ENCODE measurements at regions of chr10 and their contacts with region 1.

Region 1: GRCh38 chr10:132223156-132223590 is 36.4 kb downstream of the DPYSL4 start:
- DNase-seq: peak; percentile 89
- ATAC-seq: peak; percentile 99
- H3K4me3 Mint-ChIP-seq: no peak overlapping the region
- H3K27ac Mint-ChIP-seq: no peak overlapping the region
- H3K4me1 Mint-ChIP-seq: peaks cover 2% of the 10 kb centered on the region
- H3K27me3 Mint-ChIP-seq: no peaks in the 10 kb centered on the region

Region 2: GRCh38 chr10:131651674-131652437 is 571.3 kb before region 1 on chr10:
- CTCF ChIA-PET with region 1: no interaction called
- POLR2A ChIA-PET with region 1: no interaction called
- intact Hi-C with region 1: no loop called
- DNase-seq: no peak
- ATAC-seq: no peak
- H3K4me3 Mint-ChIP-seq: no peak overlapping the region
- H3K27ac Mint-ChIP-seq: no peak overlapping the region
- H3K4me1 Mint-ChIP-seq: peaks cover 2% of the 10 kb centered on the region
- H3K27me3 Mint-ChIP-seq: peaks cover 9% of the 10 kb centered on the region

Region 3: DNA sequence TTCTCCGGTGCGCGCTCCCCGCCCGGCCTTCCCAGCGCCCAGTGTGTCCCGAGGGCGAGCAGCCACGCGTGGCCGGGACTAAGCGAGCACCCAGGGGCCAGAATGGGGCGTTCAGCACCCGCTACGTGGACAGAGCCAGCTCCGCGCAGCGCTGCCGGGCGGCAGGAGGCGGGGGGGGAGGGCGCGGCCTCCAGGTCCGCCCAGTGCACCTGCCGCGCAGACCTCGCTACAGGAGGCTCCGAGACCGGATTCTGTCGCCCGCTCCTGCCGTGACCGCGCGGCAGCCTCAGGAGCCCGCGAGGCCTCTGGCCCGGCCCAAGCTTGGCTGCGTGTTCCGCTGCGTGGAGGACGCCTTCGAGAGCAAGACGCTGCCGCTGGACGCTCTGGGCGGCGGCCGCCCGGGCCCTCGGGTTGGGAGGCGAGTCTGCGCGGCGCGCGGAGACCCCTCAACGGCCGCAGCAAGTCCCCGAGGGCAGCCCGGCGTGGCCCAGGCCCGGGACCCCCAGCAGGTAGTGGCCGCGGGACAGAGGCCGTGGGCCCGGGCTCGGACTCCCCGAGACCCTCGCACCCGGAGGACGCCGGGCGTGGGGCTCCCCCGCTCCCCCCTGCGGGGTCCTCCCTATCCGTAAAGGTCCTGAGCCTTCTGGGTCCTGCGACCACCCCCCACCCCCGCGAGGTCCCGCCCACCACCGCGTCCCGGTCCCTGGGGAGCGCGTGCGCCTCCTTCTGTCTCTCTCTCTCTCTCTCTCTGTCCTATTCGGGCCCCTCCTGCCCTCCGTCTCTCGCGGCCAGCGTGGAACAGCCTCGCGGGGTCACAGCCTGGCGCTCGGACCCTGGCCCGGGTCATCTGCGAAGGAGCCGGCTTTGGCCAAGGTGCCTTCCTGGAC is 37.3 kb before region 1 on chr10:
- CTCF ChIA-PET with region 1: no interaction called
- POLR2A ChIA-PET with region 1: interaction called, 12 read pairs
- intact Hi-C with region 1: no loop called
- DNase-seq: peak; percentile 76
- ATAC-seq: peak; percentile 85
- H3K4me3 Mint-ChIP-seq: no peak overlapping the region
- H3K27ac Mint-ChIP-seq: no peak overlapping the region
- H3K4me1 Mint-ChIP-seq: peaks cover 3% of the 10 kb centered on the region
- H3K27me3 Mint-ChIP-seq: peaks cover 37% of the 10 kb centered on the region

Region 4: DNA sequence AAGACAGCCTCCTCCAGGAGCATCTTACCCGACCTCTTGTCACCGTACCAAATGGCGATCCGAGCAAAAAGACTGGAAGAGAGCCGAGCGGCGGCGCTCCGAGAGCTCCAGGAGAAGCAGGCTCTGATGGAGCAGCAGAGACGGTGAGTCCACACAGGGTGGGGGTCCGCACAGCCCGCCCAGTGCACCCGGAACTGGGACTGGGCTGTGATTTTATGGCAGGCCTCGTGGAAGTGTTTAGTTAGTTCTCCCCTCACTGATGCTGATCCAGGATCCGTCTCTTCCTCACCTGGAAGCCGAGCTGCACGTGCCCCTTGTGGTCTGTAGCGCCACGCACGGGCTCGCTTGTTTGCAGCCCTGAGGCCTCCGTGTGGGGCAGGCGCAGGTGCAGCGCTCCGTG is 128.4 kb after region 1 on chr10:
- CTCF ChIA-PET with region 1: interaction called, 8 read pairs
- POLR2A ChIA-PET with region 1: no interaction called
- intact Hi-C with region 1: loop called (anchors 1 kb)
- DNase-seq: no peak
- ATAC-seq: no peak
- H3K4me3 Mint-ChIP-seq: no peak overlapping the region
- H3K27ac Mint-ChIP-seq: no peak overlapping the region
- H3K4me1 Mint-ChIP-seq: no peaks in the 10 kb centered on the region
- H3K27me3 Mint-ChIP-seq: no peaks in the 10 kb centered on the region

Region 5: DNA sequence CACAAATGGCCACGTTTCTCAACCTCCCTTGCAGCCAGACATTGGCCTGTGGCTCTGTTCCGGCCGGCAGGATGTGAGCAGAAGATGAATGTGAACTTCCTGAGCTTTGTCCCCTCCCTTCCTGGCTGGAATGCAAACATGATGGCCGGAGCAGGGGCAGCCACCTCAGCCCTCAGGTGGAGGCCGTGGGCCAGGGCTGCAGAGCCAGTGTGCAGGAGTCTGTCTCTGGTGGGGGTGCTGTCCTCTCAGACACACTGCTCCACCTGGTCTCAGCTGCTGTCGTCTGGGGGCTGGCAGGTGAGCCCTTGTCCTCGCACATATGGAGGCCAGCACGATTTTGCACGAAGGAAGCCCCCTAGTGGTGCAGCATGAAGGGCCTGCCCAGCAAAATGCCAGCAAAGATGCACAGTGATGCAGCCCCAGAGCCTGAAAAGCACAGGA is 148.5 kb after region 1 on chr10:
- CTCF ChIA-PET with region 1: no interaction called
- POLR2A ChIA-PET with region 1: no interaction called
- intact Hi-C with region 1: loop called in 1 of 2 experiments (anchors 5 kb)
- DNase-seq: peak; percentile 52
- ATAC-seq: peak; percentile 53
- H3K4me3 Mint-ChIP-seq: no peak overlapping the region
- H3K27ac Mint-ChIP-seq: no peak overlapping the region
- H3K4me1 Mint-ChIP-seq: peaks cover 3% of the 10 kb centered on the region
- H3K27me3 Mint-ChIP-seq: peaks cover 2% of the 10 kb centered on the region

Region 6: GRCh38 chr10:132452631-132453469 is 229.7 kb after region 1 on chr10:
- CTCF ChIA-PET with region 1: interaction called, 4 read pairs
- POLR2A ChIA-PET with region 1: no interaction called
- intact Hi-C with region 1: loop called (anchors 1 to 2 kb)
- DNase-seq: peak; percentile 94
- ATAC-seq: peak; percentile 88
- H3K4me3 Mint-ChIP-seq: no peak overlapping the region
- H3K27ac Mint-ChIP-seq: peak overlapping the region; percentile 8
- H3K4me1 Mint-ChIP-seq: peaks cover 18% of the 10 kb centered on the region
- H3K27me3 Mint-ChIP-seq: no peaks in the 10 kb centered on the region

Region 7: GRCh38 chr10:132637477-132638129 is 414.4 kb after region 1 on chr10:
- CTCF ChIA-PET with region 1: interaction called, 3 read pairs
- POLR2A ChIA-PET with region 1: no interaction called
- intact Hi-C with region 1: loop called in 1 of 2 experiments (anchors 10 kb)
- DNase-seq: peak; percentile 21
- ATAC-seq: peak; percentile 66
- H3K4me3 Mint-ChIP-seq: no peak overlapping the region
- H3K27ac Mint-ChIP-seq: no peak overlapping the region
- H3K4me1 Mint-ChIP-seq: peaks cover 15% of the 10 kb centered on the region
- H3K27me3 Mint-ChIP-seq: no peaks in the 10 kb centered on the region

Measured in activated CD4-positive, alpha-beta T cell treated with anti-CD3 and anti-CD28 coated beads for 36 hours (primary cell).